Panc1 (cell line): ENCODE measurements at regions of chr3 and their contacts with region 1.

Region 1: GRCh38 chr3:49007068-49007770 is at the start of gene WDR6:
- DNase-seq: peak; percentile 82
- ATAC-seq: peak; percentile 93
- H3K4me3 ChIP-seq: peak within 1 kb of the TSS; percentile 82 to 85
- H3K27ac ChIP-seq: peak within 1 kb of the TSS; percentile 93
- H3K4me1 ChIP-seq: peaks cover 13% of the 10 kb centered on the region
- H3K27me3 ChIP-seq: no peaks in the 10 kb centered on the region
- CTCF ChIP-seq: no peak; the same call in 1 of the 2 replicates
- total RNA-seq, gene WDR6: 142 TPM

Region 2: DNA sequence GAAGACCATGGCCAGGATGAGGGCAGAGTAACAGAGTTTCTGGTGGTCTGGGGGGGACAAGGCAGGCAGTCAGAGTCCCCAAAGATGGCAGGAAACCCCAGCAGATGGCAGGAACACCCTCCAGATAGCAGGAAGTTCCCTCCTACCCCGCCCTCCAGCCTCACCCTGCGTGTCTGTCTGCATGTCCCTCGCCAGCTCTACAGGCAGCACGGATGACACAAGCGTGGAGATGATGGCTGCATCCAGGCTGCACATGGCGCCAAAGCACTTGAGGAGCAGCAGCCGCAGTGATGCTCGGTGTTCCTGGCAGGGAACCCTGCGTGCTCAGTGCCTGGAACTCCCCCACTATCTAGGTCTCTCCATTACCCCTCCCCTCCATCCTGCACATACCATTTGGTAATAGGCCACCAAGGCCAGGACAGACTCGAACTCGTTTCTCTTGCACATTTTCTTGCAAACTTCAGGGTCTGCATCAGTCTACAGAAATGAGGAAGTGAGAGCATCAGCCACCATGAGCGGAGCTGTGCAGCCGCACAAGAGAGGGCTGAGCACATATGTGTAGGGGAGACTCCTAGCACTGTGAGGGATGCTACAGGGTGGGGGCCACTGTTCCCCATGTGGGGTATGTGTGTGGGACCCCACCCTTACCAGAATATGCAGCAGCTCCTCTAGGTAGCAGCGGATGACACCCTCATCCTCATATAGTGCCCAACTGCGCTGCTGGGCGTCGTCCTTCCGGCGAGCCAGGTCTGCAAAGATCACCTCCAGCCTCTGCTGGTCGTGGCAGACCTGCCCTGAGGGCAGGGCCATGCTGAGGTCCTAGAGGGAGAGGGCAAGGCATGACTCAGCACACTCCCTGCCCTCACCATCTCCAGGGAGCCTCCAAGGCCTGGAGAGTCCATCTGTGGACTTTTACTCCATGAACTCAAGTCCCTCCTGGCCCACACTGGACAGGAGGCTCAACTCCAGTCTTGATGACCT is 327.5 kb before region 1 on chr3:
- CTCF ChIA-PET with region 1: no interaction called
- POLR2A ChIA-PET with region 1: no interaction called
- in situ Hi-C with region 1: no loop called
- intact Hi-C with region 1: no loop called
- DNase-seq: no peak
- ATAC-seq: no peak
- H3K4me3 ChIP-seq: no peak overlapping the region
- H3K27ac ChIP-seq: no peak overlapping the region
- H3K4me1 ChIP-seq: peaks cover 7% of the 10 kb centered on the region; the same call in 1 of the 2 replicates
- H3K27me3 ChIP-seq: no peaks in the 10 kb centered on the region
- CTCF ChIP-seq: no peak

Region 3: DNA sequence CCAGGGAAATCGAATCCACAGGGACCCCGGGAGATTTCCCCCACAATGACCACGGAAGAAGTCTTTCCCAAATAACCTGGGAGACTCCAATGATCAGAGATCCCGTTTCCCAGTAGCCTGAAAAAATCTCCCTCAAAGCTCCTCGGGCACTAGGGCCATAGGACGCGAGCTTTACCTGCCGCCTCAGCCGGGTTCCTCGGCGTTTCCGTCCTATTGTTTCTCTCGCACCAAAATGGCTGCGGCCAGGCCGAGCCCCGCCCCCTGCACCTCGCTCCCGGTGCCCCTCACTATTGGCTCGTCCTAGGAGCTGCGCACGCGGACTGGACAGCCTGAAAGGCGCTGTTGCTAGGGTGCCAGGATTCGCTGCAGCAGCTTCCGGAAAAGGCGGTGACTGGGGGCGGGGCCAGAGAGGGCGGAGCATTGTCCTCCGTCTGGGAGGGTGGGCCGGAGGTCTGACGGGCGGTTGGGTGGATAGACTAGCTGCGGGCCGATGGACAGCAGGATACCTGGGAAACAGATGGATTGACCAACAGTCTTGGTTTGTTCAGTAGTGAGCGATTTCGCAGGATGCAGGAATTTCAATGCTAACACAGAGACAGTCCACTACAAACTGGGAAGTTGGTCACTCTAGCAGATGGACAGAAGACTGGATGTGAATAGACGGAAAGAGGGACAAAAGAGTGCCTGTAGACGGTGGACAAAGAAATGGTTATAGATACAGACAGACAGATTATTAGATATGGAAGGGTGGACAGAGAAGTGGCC is 290.1 kb before region 1 on chr3 and contains the start of gene IP6K2:
- CTCF ChIA-PET with region 1: no interaction called
- POLR2A ChIA-PET with region 1: no interaction called
- in situ Hi-C with region 1: no loop called
- intact Hi-C with region 1: no loop called
- DNase-seq: peak; percentile 73
- ATAC-seq: peak; percentile 99
- H3K4me3 ChIP-seq: peak within 1 kb of the TSS; percentile 99
- H3K27ac ChIP-seq: peak within 1 kb of the TSS; percentile 96
- H3K4me1 ChIP-seq: peaks cover 15% of the 10 kb centered on the region
- H3K27me3 ChIP-seq: no peaks in the 10 kb centered on the region
- CTCF ChIP-seq: no peak
- total RNA-seq, gene IP6K2: 50.2 TPM

Region 4: GRCh38 chr3:48989126-48989795 is 18.0 kb before region 1 on chr3:
- CTCF ChIA-PET with region 1: interaction called, 19 read pairs
- POLR2A ChIA-PET with region 1: interaction called, 3 read pairs
- in situ Hi-C with region 1: no loop called
- intact Hi-C with region 1: no loop called
- DNase-seq: no peak
- ATAC-seq: peak; percentile 7
- H3K4me3 ChIP-seq: peak overlapping the region; percentile 50 to 68
- H3K27ac ChIP-seq: peak overlapping the region; percentile 81
- H3K4me1 ChIP-seq: peaks cover 19% of the 10 kb centered on the region
- H3K27me3 ChIP-seq: no peaks in the 10 kb centered on the region
- CTCF ChIP-seq: no peak